AG04449 (cell line): ENCODE measurements at regions of chr20 and their contacts with region 1.

Region 1: GRCh38 chr20:1764136-1765033 is 106.8 kb upstream of the SIRPG start:
- DNase-seq: peak; percentile 49
- H3K4me3 ChIP-seq: no peak overlapping the region
- CTCF ChIP-seq: peak; percentile 91

Region 2: DNA sequence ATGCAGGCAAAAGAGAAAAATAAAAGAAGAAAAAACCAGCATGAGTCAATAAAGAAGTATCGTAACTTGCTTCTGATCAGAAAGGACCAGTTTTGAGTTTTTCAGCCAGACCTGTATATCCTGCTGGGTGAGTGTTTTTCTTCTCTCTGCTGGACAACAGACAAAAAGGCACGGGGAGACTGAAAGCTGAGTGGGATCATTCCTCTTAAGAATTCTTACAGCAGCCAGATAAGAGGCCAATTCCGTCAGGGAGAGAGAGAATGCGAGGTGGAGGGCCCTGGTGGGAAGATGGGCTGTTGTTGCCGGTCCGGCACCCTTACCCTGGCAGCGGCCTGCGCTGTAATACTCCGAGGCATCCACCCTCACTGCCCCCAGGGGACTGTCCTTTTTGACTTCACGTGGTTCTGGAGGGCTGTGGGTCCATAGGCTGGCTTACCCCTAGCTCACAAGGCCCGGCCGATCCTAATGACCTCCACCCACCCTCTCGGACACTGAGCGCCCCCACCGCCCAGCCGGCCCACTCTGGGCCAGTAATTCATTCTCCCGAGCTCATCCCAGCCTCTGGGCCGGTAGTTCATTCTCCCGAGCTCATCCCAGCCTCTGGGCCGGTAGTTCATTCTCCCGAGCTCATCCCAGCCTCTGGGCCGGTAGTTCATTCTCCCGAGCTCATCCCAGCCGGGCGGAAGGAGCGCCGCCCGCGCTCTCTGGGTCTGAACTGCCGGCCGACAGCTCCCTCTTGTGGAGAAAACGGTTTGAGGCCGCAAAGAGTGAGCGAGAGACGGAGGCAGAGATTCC is 12.5 kb after region 1 on chr20:
- CTCF ChIA-PET with region 1: interaction called, 70 read pairs
- POLR2A ChIA-PET with region 1: no interaction called
- DNase-seq: peak; percentile 37
- H3K4me3 ChIP-seq: peak overlapping the region; percentile 89
- CTCF ChIP-seq: peak; percentile 91

Region 3: GRCh38 chr20:1790386-1790785 is 26.0 kb after region 1 on chr20:
- CTCF ChIA-PET with region 1: interaction called, 10 read pairs
- POLR2A ChIA-PET with region 1: no interaction called
- DNase-seq: no peak
- H3K4me3 ChIP-seq: no peak overlapping the region
- CTCF ChIP-seq: no peak

Region 4: DNA sequence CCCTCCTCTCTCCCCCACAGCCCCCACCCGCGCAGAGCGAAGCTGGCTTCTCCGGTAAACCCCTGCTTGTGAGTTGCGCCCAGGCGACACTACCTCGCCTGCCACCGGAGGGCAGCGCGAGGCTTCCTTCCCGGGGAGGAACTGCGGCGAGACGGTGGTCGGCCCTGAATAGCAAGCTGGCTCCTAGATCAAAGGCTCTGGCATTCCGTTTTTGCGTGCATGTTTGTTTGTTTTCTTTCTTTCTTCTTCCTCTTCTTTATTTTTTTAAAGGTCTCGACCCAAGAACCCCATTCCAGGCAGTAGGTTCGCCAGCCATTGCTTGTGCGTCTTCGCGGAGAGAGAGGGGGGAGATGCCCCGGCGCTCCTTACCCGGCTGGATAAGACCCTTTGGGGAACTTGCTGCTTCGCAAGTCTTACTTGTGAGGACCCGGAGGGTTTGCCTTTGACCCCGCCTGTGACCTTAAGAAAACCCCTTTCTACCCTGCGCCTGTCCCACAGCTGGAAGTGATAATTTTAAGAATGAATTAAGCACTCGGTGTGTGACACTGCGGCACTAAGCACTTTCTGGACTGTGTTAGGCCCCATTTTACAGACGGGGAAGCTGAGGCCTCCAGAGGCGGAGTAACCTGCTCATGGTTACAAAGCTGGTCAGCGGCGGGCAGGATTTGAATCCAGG is 38.1 kb after region 1 on chr20:
- CTCF ChIA-PET with region 1: interaction called, 45 read pairs
- POLR2A ChIA-PET with region 1: no interaction called
- DNase-seq: no peak
- H3K4me3 ChIP-seq: peak overlapping the region; percentile 54
- CTCF ChIP-seq: peak; percentile 89

Region 5: GRCh38 chr20:1965520-1966351 is 201.4 kb after region 1 on chr20:
- CTCF ChIA-PET with region 1: interaction called, 13 read pairs
- POLR2A ChIA-PET with region 1: no interaction called
- DNase-seq: no peak
- H3K4me3 ChIP-seq: peak overlapping the region; percentile 24
- CTCF ChIP-seq: peak; percentile 95

Region 6: DNA sequence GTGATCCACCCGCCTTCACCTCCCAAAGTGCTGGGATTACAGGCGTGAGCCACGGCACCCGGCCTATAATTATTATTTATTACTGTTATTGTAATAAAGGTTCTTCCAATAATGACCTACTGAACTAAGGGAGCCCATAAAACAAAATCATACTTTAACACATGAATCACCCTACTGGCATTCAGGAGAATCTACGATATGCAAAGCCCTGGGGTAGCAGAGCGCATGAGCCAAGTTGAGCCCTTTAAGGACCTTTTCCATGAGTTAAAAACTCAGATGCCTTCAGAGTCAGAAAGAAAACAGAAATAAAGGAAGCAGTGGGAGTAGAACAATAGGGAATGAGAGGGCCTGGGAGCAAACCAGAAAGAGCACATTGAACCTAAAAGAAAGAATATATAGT is 664.7 kb after region 1 on chr20:
- CTCF ChIA-PET with region 1: no interaction called
- POLR2A ChIA-PET with region 1: no interaction called
- DNase-seq: no peak
- H3K4me3 ChIP-seq: no peak overlapping the region
- CTCF ChIP-seq: no peak